Activated naive CD4-positive, alpha-beta T cell treated with anti-CD3 and anti-CD28 coated beads for 36 hours (primary cell): ENCODE measurements at regions of chr15 and their contacts with region 1.

Region 1: GRCh38 chr15:59299929-59300617 is 72.6 kb downstream of the MYO1E start:
- DNase-seq: peak; percentile 87
- H3K4me3 Mint-ChIP-seq: peak overlapping the region; percentile 33
- H3K27ac Mint-ChIP-seq: peak overlapping the region; percentile 58
- H3K4me1 Mint-ChIP-seq: peaks cover 40% of the 10 kb centered on the region
- H3K27me3 Mint-ChIP-seq: no peaks in the 10 kb centered on the region

Region 2: DNA sequence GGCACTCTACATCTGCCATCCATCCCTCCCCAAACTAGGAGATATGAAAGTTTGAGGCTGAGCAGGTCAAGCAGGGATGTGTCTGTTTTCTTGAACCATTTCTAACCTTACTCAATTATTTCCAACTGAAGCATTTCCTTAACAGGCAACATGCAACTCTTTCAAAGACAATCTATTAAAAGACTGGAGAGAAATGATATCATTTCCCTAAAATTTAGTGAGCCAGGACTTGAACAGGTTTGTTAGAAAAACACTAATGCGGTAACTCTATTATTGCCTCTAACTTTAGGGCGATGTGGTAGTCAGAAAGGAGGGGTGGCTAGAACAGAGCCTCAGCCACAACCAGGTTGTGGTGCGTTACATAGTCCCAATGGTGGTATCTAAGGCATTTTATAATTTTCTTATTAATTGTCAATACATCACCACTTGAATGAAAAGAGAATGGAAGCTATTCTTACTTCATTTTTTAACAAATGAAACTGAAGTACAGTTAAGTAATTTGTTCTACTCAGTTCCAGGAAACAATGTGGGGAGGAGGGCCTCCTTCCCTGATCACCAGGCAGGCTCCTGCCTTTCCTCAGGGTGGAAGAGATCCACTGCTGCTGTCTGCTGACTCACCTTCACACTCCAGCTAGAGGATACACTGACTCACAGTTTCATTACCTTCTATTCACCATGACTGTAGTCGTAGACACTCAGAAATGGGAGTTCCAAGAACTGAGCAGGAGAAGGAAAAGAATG is 49.8 kb after region 1 on chr15:
- CTCF ChIA-PET with region 1: no interaction called
- intact Hi-C with region 1: loop called (anchors 2 kb)
- DNase-seq: peak; percentile 40
- H3K4me3 Mint-ChIP-seq: no peak overlapping the region
- H3K27ac Mint-ChIP-seq: no peak overlapping the region
- H3K4me1 Mint-ChIP-seq: peaks cover 17% of the 10 kb centered on the region
- H3K27me3 Mint-ChIP-seq: no peaks in the 10 kb centered on the region

Region 3: DNA sequence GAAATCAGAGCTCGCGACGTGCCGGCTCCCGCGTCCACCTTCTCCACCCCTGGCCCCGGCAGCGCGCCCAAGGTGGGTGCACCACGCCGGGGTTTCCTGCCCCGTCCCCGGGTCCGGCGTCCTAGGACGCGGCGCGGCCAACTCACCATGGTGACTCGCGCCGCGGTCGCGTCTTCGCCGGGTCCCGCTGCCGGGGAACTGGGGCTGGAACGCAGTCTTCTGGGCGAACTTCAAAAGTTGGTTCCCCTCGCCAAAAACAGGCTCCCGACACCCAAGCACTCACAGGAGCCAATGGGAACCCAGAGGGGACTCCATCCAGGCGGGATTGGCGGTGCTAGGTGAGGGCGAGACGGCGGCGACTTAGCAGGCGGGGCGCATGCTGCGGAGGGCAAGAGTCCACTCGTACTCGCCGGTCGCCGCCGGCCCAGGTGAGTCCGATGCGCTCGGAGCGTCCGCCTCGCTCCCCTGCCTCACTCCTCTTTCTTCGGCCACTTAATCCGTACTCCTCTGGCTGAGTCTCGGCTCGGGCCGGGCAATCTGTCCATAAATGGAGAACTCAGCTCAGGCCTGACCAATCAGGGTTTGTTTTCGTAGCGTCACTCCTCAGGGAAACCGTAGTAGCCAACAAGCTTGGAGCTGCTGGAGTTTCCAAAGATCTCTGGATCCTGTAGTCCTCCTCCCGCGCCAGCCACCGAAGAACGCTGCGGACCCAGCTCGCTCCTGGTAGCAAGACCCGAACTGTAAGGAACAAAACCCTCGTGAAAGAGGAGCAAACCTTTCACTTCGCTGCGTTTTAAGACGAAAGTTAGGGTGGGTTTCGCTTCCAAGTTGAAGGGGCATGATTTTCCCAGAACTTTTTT is 72.5 kb after region 1 on chr15 and contains the start of gene MYO1E:
- CTCF ChIA-PET with region 1: no interaction called
- intact Hi-C with region 1: loop called (anchors 1 kb)
- DNase-seq: peak; percentile 28
- H3K4me3 Mint-ChIP-seq: peak within 1 kb of the TSS; percentile 74
- H3K27ac Mint-ChIP-seq: no peak within 1 kb of the TSS
- H3K4me1 Mint-ChIP-seq: peaks cover 14% of the 10 kb centered on the region
- H3K27me3 Mint-ChIP-seq: peaks cover 48% of the 10 kb centered on the region
- total RNA-seq, gene MYO1E: 1.4 to 2.9 TPM